Right cardiac atrium (tissue), 5 donors: ENCODE measurements at regions of chr9 and their contacts with region 1.

Region 1: DNA sequence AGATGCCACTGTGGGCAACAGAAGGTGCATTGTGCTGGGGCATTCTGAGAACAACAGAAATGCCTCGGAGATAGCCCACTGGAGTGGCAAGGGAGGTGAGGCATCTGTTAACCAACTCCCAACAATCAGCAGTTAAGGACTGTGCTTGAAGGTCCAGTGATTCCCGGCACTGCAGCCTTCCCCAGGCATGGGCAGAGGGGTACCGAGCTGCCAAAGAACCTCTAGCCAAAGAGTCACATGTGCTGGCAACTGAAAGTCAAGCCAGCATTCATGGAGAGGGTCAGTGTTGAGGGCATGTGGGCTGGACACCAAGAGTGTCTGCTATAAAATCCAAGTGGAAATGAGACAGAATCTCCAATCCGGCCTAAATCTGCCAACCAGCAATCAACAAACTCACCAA is 149.6 kb downstream of the ASTN2 start:
- DNase-seq: peak; percentile 28 to 70 (median 68)
- ATAC-seq: peak; percentile 86 to 90
- H3K4me3 ChIP-seq: no peak overlapping the region
- H3K27ac ChIP-seq: no peak overlapping the region
- H3K4me1 ChIP-seq: no peaks in the 10 kb centered on the region
- H3K27me3 ChIP-seq: no peaks in the 10 kb centered on the region

Region 2: DNA sequence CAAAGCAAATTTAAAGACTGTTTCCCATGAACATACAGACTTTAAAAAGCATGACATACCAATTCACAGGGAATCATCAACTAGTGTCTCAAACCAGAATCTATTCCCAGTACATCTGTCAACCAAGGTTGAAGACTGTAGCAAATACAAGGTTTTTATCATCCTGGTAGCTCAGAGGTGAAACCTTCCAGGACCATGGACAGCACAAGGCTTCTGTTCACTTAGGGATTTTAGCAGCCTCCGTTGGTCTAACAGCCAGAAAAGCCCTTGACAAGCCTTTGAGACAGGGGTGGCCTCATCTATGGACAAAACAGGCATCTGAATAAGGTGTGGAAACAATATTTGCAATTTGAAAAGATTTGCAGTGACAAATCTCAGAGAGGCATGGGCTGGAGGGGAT is 459.2 kb before region 1 on chr9:
- intact Hi-C with region 1: no loop called
- DNase-seq: no peak
- ATAC-seq: no peak
- H3K4me3 ChIP-seq: no peak overlapping the region
- H3K27ac ChIP-seq: no peak overlapping the region
- H3K4me1 ChIP-seq: no peaks in the 10 kb centered on the region
- H3K27me3 ChIP-seq: no peaks in the 10 kb centered on the region

Region 3: DNA sequence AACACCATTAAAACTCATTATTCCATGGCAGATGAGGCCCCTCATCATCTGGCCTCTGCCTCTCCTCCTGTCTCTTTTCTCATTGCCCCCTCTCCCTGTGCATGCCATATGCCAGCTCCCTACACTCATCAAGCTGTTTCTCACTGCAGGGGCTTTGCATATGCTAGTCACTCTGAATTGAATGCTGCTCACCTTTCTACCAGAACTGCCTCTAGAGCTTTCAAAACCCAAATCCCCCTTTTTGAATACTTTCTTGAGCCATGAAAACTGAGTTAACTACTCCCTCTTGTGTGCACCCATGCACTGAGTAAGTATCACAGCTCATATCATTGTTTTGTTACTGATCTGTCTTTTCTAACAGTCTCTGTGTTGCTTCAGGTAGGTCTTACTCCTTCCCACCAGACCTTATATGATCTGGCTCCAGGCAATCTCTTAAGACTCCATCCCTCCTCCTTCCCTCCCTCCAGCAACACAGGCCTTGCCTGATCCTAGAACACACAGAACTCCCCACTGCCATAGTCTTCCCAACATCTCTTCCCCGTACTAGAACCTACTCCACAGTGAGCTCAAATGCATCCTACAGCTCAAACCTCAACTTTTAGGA is 89.1 kb after region 1 on chr9:
- intact Hi-C with region 1: no loop called
- DNase-seq: no peak
- ATAC-seq: no peak
- H3K4me3 ChIP-seq: no peak overlapping the region
- H3K27ac ChIP-seq: no peak overlapping the region
- H3K4me1 ChIP-seq: no peaks in the 10 kb centered on the region
- H3K27me3 ChIP-seq: no peaks in the 10 kb centered on the region

Region 4: DNA sequence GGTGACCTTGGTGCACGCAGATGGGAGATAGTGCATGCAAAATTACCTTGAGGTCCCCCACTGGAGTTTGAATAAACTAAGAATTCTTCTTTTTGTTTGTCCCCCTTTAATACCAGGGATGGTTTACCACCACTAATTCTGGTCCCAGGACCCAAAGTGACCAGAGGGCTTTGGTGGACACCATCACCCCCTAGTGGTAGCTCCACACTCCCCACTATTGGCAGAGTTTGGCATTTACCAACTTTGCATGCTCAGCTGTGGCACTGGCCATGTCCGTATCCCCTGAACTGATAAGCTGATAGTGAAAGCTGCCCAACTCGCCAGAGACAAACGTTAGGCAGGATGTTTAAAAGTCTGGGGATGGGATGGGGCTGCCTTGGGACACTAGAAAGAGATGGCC is 146.3 kb after region 1 on chr9:
- intact Hi-C with region 1: loop called in 1 of 4 experiments (anchors 10 kb)
- DNase-seq: peak in 2 of 3 donors; percentile 55 to 57
- ATAC-seq: peak; percentile 34 to 49
- H3K4me3 ChIP-seq: no peak overlapping the region
- H3K27ac ChIP-seq: no peak overlapping the region
- H3K4me1 ChIP-seq: no peaks in the 10 kb centered on the region
- H3K27me3 ChIP-seq: no peaks in the 10 kb centered on the region